Right ventricle myocardium inferior (tissue), 1 donor: ENCODE measurements at regions of chr1 and their contacts with region 1.

Region 1: DNA sequence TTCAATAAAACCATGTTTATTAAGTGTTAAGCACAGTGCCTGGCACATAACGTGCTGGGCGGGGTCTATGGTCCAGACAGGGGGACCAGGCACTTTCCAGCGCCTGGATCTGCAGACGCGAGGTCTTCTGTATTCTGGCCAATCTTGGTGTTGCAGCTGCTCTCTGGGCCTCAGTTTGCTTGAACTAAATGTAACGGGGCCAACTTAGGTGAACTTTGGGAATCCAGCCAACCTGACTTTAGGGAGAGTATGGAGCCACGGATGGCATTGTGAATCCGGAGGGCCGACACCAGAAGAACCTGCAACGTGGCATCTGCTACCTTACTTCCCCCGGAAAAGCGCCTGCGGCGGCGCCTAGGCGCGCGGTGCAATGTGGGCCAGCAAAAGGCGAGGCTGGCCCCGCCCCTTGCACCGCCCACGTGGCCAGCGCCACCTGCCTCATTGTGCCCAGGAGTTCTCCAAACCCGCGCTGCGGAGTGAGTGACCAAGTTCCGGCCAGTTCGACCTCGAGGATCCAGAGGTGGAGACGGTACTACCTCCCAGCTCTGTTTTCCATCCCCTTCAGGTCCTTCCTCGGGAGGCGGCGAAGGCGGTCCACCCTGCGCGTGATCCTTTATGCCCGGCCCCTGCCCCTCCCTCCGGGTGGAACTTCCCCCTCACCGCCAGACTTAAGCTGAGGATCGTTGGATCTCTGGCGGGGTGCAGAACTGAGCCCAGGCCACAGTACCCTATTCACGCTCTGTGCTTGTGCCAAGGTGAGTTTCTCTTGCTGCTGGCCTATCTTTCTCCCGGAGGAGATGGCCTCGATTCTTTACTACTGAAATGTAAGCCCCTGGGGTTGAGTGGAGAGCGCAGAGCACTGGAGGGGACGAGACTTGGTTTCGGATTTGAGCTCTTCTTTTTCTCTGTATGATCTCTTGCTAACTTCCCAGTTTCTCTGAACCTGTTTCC is at the start of gene AKR1A1:
- DNase-seq: peak; percentile 95
- ATAC-seq: peak; percentile 98
- total RNA-seq, gene AKR1A1: 55.9 TPM

Region 2: DNA sequence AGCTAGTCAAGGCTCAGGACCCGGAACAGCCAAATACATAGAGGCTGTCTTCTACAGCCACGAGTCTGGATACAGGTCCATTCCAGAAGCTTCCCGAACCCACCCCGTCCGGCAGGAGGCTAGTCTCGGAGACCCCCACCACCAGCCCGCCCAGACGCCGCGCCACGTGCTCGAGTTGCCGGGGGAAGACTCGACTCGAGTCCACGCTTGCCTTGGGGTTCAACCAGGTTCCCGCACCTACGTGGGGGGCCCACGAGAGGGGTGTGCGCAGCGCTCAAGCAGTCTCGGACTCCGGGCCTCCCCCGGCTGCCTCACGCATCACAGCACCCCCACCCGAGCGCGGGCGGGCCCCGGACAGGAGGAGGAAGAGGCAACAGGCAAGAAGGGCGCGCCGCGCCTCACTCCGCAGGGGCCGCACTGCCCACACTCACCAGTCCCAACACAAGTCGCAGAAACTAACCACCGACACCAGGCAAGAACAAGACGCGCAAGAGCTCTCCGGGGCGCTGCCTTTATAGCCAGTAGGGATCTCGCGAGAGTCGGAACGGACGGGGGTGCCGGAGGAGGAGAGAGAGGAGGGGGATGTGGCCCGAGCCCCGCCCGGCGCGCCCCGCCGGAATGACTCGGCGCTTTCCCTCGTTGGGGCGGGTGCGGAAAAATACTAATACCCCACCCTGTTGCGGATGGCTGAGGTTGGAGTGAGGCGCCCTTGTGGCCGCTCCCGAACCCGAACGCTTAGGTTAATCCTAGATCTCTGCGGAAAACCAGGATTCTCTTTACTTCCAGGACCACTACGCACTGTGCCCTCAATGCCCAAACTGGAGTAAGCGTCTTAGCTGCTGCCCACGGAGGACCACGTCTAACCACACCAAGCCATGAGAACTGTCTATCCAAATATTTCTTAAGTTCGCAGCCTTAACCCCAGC is 29.0 kb before region 1 on chr1 and contains the start of gene PRDX1:
- intact Hi-C with region 1: loop called (anchors 1 kb)
- DNase-seq: peak; percentile 96
- ATAC-seq: peak; percentile 96
- total RNA-seq, gene PRDX1: 314 TPM